ENCODE measurements at regions of chr10 and their contacts with region 1.

Region 1: GRCh38 chr10:7969623-7970022 is 84.9 kb upstream of the GATA3 start:
- DNase-seq: peak; percentile 86
- H3K4me3 ChIP-seq: peak overlapping the region in 1 of 3 experiments; percentile 41
- H3K27ac ChIP-seq: peak overlapping the region; percentile 83
- H3K4me1 ChIP-seq: peaks cover 49% of the 10 kb centered on the region
- H3K27me3 ChIP-seq: no peaks in the 10 kb centered on the region
- CTCF ChIP-seq: no peak
- POLR2A ChIP-seq: no peak

Region 2: DNA sequence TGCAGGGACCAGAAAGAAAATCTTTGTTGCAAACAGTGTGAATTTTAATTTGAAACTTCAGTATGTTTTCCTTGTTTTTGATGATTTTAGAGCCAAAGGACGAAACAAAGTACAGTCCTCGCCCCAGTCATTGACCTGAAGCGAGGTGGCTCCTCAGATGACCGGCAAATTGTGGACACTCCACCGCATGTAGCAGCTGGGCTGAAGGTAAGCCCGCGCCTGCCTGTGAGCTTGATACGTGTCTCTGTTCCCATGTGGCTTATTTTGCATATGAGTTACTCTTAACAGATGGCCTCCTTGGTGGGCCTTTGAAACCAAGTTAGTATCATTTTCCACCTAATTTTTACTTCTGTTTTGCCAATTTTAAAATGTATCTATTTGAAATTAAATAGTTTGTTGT is 1868.4 kb before region 1 on chr10:
- CTCF ChIA-PET with region 1: no interaction called
- POLR2A ChIA-PET with region 1: no interaction called
- dilution Hi-C with region 1: no loop called
- intact Hi-C with region 1: no loop called
- DNase-seq: no peak
- H3K4me3 ChIP-seq: no peak overlapping the region
- H3K27ac ChIP-seq: no peak overlapping the region
- H3K4me1 ChIP-seq: peaks cover 9% of the 10 kb centered on the region
- H3K27me3 ChIP-seq: no peaks in the 10 kb centered on the region
- CTCF ChIP-seq: no peak
- POLR2A ChIP-seq: no peak

Region 3: DNA sequence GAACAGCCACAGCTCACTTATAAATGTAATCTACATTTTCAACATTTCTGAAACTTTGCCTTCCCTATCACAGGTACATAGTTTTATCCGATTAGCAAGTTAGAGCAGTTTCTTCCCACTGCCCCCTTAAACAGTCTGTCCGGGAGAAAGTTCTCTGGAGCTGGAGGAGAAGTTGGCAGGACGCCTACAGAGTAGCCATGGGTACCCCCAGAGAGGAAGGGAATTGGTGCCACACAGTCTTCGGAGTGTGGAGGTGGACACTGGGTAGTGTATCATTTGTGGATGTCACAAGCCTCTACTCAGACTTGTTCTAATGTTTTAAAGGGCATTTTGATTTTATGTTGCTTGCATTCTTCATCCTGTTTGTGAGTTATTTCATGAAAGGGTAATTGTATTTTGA is 112.4 kb before region 1 on chr10:
- CTCF ChIA-PET with region 1: no interaction called
- POLR2A ChIA-PET with region 1: no interaction called
- dilution Hi-C with region 1: no loop called
- intact Hi-C with region 1: no loop called
- DNase-seq: peak; percentile 14
- H3K4me3 ChIP-seq: no peak overlapping the region
- H3K27ac ChIP-seq: no peak overlapping the region
- H3K4me1 ChIP-seq: no peaks in the 10 kb centered on the region
- H3K27me3 ChIP-seq: no peaks in the 10 kb centered on the region
- CTCF ChIP-seq: no peak
- POLR2A ChIP-seq: no peak

Region 4: DNA sequence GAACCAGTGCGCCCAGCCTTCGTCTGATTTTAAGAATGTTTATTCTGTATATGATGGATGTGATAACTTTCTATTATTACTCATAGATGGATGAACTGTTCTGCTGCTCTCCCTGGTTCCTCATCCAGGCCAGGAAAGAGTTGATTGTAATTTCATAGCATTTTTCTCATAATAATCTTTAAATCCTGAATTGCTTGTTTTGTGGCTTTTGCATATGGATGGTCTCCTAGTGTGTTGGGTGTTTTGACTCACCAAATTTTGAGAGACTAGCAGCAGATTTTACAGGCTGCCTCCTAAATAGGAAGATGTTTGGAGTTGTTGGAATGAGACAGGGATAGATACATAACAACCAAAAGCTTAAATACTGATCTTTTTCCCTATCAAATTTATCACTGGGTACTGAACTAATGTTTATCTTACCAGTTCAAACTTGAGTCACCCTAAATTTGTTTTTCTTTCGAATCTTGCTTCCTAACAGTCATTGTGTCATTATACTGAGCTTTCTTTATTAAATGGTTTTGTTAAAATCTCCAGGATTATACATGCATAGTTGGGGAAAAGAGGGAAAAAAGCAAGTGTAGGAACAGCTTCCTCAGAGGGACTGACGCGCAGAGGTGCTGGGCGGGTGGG is 21.1 kb before region 1 on chr10:
- CTCF ChIA-PET with region 1: interaction called, 3 read pairs
- POLR2A ChIA-PET with region 1: no interaction called
- dilution Hi-C with region 1: no loop called
- intact Hi-C with region 1: loop called (anchors 2 kb)
- DNase-seq: peak; percentile 72
- H3K4me3 ChIP-seq: peak overlapping the region in 1 of 3 experiments; percentile 40
- H3K27ac ChIP-seq: peak overlapping the region; percentile 78
- H3K4me1 ChIP-seq: peaks cover 26% of the 10 kb centered on the region
- H3K27me3 ChIP-seq: no peaks in the 10 kb centered on the region
- CTCF ChIP-seq: no peak
- POLR2A ChIP-seq: no peak

Region 5: GRCh38 chr10:7986851-7987250 is 17.2 kb after region 1 on chr10:
- CTCF ChIA-PET with region 1: interaction called, 14 read pairs
- POLR2A ChIA-PET with region 1: no interaction called
- dilution Hi-C with region 1: no loop called
- intact Hi-C with region 1: no loop called
- DNase-seq: no peak
- H3K4me3 ChIP-seq: no peak overlapping the region
- H3K27ac ChIP-seq: no peak overlapping the region
- H3K4me1 ChIP-seq: no peaks in the 10 kb centered on the region
- H3K27me3 ChIP-seq: no peaks in the 10 kb centered on the region
- CTCF ChIP-seq: no peak
- POLR2A ChIP-seq: no peak

Region 6: DNA sequence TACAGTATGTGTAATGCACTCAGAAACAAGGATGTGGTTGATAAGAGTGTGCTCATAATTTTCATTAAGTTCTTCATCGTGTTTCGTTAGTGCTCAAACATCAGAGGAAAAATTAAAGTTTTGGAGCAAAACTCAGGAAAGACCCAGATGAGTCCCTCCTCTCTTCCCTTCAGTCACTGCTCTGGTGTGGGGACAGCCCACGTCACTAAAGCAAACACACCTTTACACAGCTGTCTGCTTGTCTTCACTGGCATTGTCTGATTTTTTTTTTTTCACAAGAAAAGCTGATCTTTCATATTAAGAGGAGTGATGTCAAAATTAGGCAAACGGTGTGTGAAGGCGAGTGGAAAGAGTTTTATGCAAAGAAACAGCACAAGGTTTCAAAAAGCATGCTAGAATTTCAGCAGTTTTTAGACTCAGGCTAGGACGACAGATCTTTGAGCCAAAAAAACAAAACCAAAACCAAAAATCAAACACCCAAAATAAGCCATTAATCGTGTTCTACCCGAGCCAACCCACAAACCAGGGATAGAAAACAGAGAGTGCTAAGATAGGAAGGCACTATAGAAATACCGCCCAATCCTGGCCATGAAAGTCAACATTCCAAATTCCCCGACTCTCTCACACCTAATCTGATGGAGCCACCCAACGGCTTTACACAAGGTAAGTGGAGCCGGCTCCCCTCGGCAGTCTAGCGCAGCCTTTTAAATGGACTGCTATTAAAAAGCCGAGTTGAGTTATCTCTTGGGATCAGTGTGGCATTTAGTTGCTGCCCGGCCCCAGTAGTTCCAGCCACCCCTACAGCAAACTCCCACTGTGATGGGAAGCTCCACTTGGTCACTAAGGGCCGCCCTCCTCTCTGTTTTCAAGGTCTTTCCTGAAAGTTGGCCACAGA is 57.0 kb after region 1 on chr10:
- CTCF ChIA-PET with region 1: no interaction called
- POLR2A ChIA-PET with region 1: no interaction called
- dilution Hi-C with region 1: no loop called
- intact Hi-C with region 1: no loop called
- DNase-seq: peak; percentile 13
- H3K4me3 ChIP-seq: peak overlapping the region; percentile 10 to 51 (median 16)
- H3K27ac ChIP-seq: no peak overlapping the region
- H3K4me1 ChIP-seq: peaks cover 8% of the 10 kb centered on the region
- H3K27me3 ChIP-seq: peaks cover 0 to 6% of the 10 kb centered on the region in 2 experiments
- CTCF ChIP-seq: no peak
- POLR2A ChIP-seq: no peak

Region 7: DNA sequence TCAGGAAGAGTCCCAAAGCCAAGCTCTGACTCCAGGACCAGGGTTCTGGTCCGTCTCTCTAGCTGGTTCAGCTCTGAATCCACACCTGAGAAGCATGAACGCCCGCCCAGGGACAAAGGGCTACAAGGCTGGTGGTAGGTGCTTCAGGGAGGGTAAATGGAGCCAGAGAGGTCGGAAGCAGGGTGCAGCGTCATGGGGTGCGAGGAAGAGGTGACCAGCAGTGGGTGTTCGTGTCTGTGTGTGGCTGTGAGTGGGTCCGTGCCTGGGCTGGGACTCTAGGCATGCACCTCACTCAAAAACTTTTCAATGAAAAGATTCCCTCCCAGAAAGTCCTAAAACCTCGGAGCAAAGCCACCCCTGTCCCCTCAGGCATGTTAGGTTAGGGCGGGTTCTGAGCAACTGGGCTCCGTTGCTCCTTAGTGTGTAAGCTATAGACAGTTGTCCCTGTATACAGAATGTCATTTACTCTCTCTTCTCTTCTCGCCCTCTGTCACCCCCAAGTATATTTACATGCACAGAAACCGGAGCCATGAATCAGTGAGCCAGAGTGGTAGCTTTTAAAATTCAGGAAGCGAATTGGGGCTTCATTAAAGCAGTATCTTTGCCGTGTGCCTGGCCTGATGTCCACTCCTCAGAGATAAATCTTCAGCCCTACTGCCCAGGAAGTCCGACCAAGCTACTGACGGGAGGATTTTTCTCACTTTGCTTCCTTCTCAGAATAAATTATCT is 72.5 kb after region 1 on chr10:
- CTCF ChIA-PET with region 1: no interaction called
- POLR2A ChIA-PET with region 1: no interaction called
- dilution Hi-C with region 1: no loop called
- intact Hi-C with region 1: loop called (anchors 2 kb)
- DNase-seq: peak; percentile 16
- H3K4me3 ChIP-seq: no peak overlapping the region
- H3K27ac ChIP-seq: no peak overlapping the region
- H3K4me1 ChIP-seq: peaks cover 67% of the 10 kb centered on the region
- H3K27me3 ChIP-seq: peaks cover 25 to 28% of the 10 kb centered on the region in 2 experiments
- CTCF ChIP-seq: no peak
- POLR2A ChIP-seq: no peak

Measured in endothelial cell of umbilical vein (primary cell).